Calu3 (cell line): ENCODE measurements at regions of chr11 and their contacts with region 1.

Region 1: GRCh38 chr11:17978553-17979287 is 34.1 kb downstream of the SERGEF start:
- DNase-seq: peak; percentile 69
- H3K4me3 Mint-ChIP-seq: no peak overlapping the region
- H3K27ac Mint-ChIP-seq: no peak overlapping the region
- H3K4me1 Mint-ChIP-seq: peaks cover 2% of the 10 kb centered on the region
- H3K27me3 Mint-ChIP-seq: no peaks in the 10 kb centered on the region
- CTCF ChIP-seq: peak; percentile 59

Region 2: DNA sequence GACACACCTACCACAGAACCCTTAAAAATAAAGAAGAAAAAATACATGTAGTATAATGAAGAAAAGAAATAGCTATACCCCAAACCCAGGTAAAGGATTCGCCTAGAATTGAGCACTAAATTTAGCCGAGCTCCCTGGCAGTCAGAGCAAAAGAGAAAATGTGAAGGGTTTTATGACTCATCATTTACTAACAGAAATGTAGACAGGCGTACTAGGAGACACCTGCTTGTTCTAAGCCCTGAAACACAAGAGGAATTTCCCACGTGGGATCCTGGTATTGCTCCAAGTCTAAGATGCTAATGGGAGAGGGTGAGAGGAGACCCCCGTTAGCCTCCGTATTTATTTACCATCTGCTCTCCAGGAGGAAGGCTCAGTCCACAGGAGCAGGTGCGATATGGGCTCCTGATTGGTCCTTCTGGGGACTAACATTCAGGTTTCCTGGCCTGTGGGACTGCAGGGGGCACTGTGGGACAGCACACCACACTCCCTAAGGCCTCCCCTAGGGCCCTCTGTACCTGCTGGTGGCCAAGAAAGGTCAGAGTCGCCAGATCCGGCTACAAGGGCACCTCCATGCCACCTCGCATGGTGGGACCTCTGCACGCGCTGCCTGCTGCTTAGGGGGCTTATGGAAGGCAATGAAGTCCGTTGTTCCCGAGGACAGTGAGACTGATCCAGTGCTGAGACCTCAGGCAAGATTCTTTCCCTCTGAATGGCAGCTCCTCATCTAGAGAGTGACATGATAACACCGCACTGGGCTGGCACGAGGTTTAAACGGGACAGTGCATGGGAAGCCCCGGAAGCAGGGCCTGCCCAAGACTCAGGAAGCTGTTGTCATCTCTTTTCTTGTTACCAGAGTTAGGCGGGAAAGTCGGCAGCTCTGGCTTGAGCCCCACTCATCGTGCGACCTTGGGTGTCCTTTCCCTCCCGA is 218.4 kb before region 1 on chr11:
- CTCF ChIA-PET with region 1: interaction called, 13 read pairs
- intact Hi-C with region 1: loop called (anchors 1 kb)
- DNase-seq: peak; percentile 70
- H3K4me3 Mint-ChIP-seq: no peak overlapping the region
- H3K27ac Mint-ChIP-seq: no peak overlapping the region
- H3K4me1 Mint-ChIP-seq: no peaks in the 10 kb centered on the region
- H3K27me3 Mint-ChIP-seq: peaks cover 54% of the 10 kb centered on the region
- CTCF ChIP-seq: peak; percentile 72

Region 3: DNA sequence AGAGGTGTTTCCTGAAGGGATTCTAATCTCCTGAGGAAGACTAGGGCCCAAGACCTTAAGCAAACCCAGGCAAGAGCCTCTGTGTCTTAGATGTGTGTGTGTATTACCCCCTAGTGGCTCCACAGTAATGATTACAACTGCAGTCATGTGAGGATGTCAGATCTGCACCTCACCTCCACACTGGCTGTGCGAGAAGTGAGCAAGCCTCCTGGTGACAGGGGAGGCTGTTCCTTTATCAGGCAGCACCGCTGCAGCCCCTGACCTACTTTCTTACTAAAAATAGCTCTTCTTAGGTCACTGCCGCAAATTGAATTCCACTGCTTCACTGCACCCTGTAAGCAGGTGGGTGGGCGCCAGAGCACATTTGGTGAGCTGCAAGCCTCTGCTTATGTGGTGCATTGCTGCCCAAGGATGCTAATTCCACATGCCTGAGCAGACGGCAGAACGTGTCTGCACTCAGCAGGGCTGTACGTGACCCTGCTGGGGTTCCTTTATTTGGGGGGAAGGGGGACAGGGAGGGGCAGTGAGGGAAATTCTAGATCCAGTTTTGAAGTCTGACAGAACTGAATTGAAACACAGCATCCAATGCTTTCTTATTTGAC is 131.8 kb before region 1 on chr11:
- CTCF ChIA-PET with region 1: no interaction called
- intact Hi-C with region 1: no loop called
- DNase-seq: peak; percentile 30
- H3K4me3 Mint-ChIP-seq: no peak overlapping the region
- H3K27ac Mint-ChIP-seq: no peak overlapping the region
- H3K4me1 Mint-ChIP-seq: peaks cover 31% of the 10 kb centered on the region
- H3K27me3 Mint-ChIP-seq: no peaks in the 10 kb centered on the region
- CTCF ChIP-seq: no peak

Region 4: GRCh38 chr11:18063084-18063483 is 84.4 kb after region 1 on chr11:
- CTCF ChIA-PET with region 1: no interaction called
- intact Hi-C with region 1: no loop called
- DNase-seq: no peak
- H3K4me3 Mint-ChIP-seq: no peak overlapping the region
- H3K27ac Mint-ChIP-seq: no peak overlapping the region
- H3K4me1 Mint-ChIP-seq: no peaks in the 10 kb centered on the region
- H3K27me3 Mint-ChIP-seq: no peaks in the 10 kb centered on the region
- CTCF ChIP-seq: no peak